Posterior vena cava (tissue), 2 donors: ENCODE measurements at regions of chr6 and their contacts with region 1.

Region 1: GRCh38 chr6:52868240-52868639 is 27.6 kb upstream of the GSTA5 start:
- DNase-seq: no peak

Region 2: GRCh38 chr6:53375847-53376246 is 507.6 kb after region 1 on chr6:
- intact Hi-C with region 1: loop called in 1 of 2 experiments (anchors 10 kb)
- DNase-seq: no peak